Sigmoid colon (tissue), 7 donors: ENCODE measurements at regions of chr19 and their contacts with region 1.

Region 1: DNA sequence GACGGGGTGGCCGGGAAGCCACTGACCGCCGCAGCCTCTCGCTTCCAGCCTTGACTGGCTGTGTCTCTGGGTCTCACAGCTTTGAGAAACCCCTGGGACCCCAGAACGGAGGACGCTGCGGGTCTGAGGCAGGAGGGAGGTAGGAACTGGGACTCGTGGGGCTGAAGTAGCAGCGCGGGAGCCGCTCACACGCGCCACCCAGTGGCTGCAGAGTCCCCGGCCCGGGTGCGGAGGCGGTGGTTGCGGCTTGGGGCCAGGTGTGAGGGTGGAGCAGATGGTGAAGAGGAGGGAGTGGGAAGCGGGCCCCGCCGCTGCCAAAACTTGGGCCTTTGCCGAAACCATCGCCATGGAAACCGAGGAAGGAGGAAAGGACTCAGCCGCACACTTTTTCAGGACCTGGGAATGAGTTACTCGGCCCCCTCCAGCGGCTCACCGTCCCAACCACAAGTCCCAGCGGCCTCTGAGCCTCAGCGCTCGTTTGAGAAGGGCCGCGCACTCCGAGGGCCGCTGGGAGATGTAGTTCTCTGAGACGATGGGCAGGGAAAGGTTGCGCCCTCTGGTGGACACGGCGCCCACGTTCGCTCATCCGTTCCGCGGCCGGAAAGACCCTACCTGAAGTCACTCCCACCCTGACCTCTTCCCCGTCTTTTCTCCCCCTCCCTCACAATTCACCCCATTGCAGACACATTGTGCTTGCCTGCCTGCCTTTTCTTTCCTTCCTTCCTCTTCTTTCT is 2.2 kb upstream of the SLC17A7 start:
- DNase-seq: peak; percentile 98
- H3K4me3 ChIP-seq: peak overlapping the region; percentile 40 to 69 (median 55)
- H3K27ac ChIP-seq: peak overlapping the region; percentile 69 to 91 (median 74)
- H3K4me1 ChIP-seq: peaks cover 0 to 33% (median 21%) of the 10 kb centered on the region in 4 donors
- H3K27me3 ChIP-seq: peaks cover 17 to 47% (median 45%) of the 10 kb centered on the region in 3 donors
- CTCF ChIP-seq: peak; percentile 79 to 89 (median 82)
- EP300 ChIP-seq: no peak
- POLR2A ChIP-seq: no peak

Region 2: GRCh38 chr19:49224856-49225255 is 218.7 kb before region 1 on chr19:
- intact Hi-C with region 1: loop called (anchors 1 kb)
- DNase-seq: no peak
- H3K4me3 ChIP-seq: no peak overlapping the region
- H3K27ac ChIP-seq: no peak overlapping the region
- H3K4me1 ChIP-seq: peaks cover 0 to 6% (median 0%) of the 10 kb centered on the region in 4 donors
- H3K27me3 ChIP-seq: no peaks in the 10 kb centered on the region
- CTCF ChIP-seq: no peak
- EP300 ChIP-seq: no peak
- POLR2A ChIP-seq: no peak

Region 3: GRCh38 chr19:49272184-49272583 is 171.3 kb before region 1 on chr19:
- intact Hi-C with region 1: loop called (anchors 5 kb)
- DNase-seq: no peak
- H3K4me3 ChIP-seq: no peak overlapping the region
- H3K27ac ChIP-seq: no peak overlapping the region
- H3K4me1 ChIP-seq: no peaks in the 10 kb centered on the region
- H3K27me3 ChIP-seq: peaks cover 0 to 4% (median 0%) of the 10 kb centered on the region in 3 donors
- CTCF ChIP-seq: no peak
- EP300 ChIP-seq: no peak
- POLR2A ChIP-seq: no peak

Region 4: DNA sequence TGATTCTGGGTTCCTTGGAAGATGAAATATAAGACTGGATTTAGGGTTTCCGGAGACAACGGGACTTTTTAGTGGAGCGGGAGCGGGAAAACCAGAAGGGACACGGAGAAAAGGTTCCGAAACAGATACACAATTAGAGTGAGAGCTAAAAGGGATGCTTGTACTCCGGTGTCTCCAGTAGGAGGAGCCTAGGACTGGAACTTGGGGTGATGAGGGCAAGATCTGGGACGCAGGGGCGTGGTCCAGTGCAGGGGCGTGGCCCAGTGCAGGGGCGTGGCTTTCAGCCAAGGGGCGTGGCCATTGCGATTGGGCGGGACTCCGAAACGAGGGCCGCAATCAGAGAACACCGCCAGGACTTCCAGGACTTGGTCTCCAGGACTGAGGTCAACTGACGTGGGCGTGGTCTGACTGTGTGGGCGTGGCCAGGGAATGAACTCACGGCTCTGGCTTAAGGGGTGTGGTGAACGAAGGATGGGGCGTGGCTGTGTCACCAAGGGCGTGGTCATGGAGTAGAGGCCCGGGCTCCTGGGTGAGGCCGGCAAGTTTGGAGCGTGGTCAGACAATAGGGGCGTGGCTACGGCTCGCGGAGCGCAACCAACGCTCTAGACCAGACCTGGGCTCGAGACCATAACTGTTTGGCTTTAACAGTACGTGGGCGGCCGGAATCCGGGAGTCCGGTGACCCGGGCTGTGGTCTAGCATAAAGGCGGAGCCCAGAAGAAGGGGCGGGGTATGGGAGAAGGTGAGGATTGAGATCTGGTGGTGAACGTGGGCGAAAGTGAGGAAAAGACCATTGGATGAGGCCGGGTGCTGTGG is 80.1 kb before region 1 on chr19 and contains the start of gene DKKL1:
- intact Hi-C with region 1: loop called (anchors 1 kb)
- DNase-seq: peak; percentile 100
- H3K4me3 ChIP-seq: peak within 1 kb of the TSS; percentile 76 to 92 (median 85)
- H3K27ac ChIP-seq: peak within 1 kb of the TSS; percentile 93 to 98 (median 96)
- H3K4me1 ChIP-seq: peaks cover 0 to 34% (median 20%) of the 10 kb centered on the region in 4 donors
- H3K27me3 ChIP-seq: no peaks in the 10 kb centered on the region
- CTCF ChIP-seq: peak in 1 of 4 experiments; percentile 21
- EP300 ChIP-seq: peak in 1 of 4 donors; percentile 10
- POLR2A ChIP-seq: peak; percentile 78 to 84
- total RNA-seq, gene DKKL1: 1.8 to 2.0 TPM in 2 of 4 donors, not detected in the others

Region 5: DNA sequence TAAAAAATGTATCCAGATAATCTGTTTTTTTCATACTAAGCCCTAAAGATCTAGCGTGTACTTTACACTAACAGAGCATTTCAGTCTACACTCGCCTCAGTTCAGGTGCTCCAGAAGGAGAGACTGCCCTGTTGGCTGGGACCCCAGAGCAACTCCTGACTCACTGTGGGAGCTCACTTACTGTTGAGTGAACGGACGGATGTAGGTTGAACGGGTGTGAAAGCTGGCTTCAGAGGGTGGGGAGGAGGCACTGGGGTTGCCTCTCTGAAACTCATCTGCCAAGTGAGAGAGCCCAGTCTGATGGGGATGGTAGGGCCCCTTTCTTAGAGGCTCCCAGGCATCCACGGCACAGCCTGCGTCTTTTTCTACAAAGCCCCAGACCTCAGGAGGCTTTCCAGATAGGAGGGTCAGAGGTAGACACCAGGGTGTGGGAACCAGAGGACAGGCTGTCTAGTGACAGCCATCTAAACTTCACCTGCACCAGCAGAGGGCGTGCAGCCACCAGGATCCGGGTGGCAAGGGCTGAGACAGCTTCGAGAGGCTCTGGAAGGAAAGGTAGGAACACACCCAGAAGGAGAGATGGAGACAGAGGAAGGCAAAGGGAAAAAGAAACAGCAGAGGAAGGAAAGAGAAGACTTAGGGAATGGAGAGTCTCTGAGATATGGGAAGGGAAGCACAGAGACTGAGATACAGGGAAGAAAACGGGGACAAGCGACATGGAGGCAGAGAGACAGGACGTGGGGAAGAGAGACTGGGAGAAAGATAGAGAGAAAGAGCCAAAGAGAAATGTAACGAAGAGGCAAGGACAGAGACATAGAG is 51.7 kb before region 1 on chr19:
- intact Hi-C with region 1: loop called (anchors 1 kb)
- DNase-seq: peak; percentile 88
- H3K4me3 ChIP-seq: no peak overlapping the region
- H3K27ac ChIP-seq: no peak overlapping the region
- H3K4me1 ChIP-seq: peaks cover 0 to 3% (median 0%) of the 10 kb centered on the region in 4 donors
- H3K27me3 ChIP-seq: peaks cover 6 to 52% (median 14%) of the 10 kb centered on the region in 3 donors
- CTCF ChIP-seq: peak; percentile 61 to 77 (median 68)
- EP300 ChIP-seq: no peak
- POLR2A ChIP-seq: no peak